B cell (primary cell): ENCODE measurements at regions of chr7 and their contacts with region 1.

Region 1: GRCh38 chr7:5396999-5397663 is 26.5 kb downstream of the TNRC18 start:
- DNase-seq: peak; percentile 96
- ATAC-seq: peak; percentile 94
- H3K4me3 ChIP-seq: peak overlapping the region; percentile 70 to 87 (median 79)
- H3K4me3 Mint-ChIP-seq: peak overlapping the region; percentile 86
- H3K27ac ChIP-seq: peak overlapping the region; percentile 81 to 96
- H3K27ac Mint-ChIP-seq: peak overlapping the region; percentile 89
- H3K4me1 ChIP-seq: peaks cover 19 to 33% of the 10 kb centered on the region in 2 donors
- H3K4me1 Mint-ChIP-seq: peaks cover 27% of the 10 kb centered on the region
- H3K27me3 ChIP-seq: no peaks in the 10 kb centered on the region
- H3K27me3 Mint-ChIP-seq: no peaks in the 10 kb centered on the region
- CTCF ChIP-seq: no peak

Region 2: DNA sequence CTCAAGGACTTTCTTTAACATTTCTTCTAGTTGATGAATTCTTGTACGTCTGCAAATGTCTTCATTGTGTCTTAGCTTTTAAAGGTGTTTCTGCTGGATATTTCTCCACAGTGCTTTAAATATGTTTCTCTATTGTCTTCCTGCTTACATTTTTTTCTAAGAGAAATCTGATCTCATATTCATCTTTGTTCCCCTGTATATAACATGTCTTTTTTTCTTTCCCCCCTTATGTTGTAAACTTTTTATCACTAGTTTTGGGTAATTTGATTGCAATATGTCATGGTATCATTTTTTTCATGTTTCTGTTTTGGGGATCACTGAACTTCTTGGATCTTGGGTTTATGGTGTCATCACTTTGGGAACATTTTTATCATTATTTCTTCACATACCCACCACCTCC is 344.0 kb before region 1 on chr7:
- CTCF ChIA-PET with region 1: no interaction called
- POLR2A ChIA-PET with region 1: no interaction called
- intact Hi-C with region 1: no loop called
- DNase-seq: no peak
- ATAC-seq: no peak
- H3K4me3 ChIP-seq: no peak overlapping the region
- H3K4me3 Mint-ChIP-seq: no peak overlapping the region
- H3K27ac ChIP-seq: no peak overlapping the region
- H3K27ac Mint-ChIP-seq: no peak overlapping the region
- H3K4me1 ChIP-seq: no peaks in the 10 kb centered on the region
- H3K4me1 Mint-ChIP-seq: peaks cover 9% of the 10 kb centered on the region
- H3K27me3 ChIP-seq: no peaks in the 10 kb centered on the region
- H3K27me3 Mint-ChIP-seq: no peaks in the 10 kb centered on the region
- CTCF ChIP-seq: no peak

Region 3: GRCh38 chr7:5237286-5237685 is 159.8 kb before region 1 on chr7:
- CTCF ChIA-PET with region 1: interaction called, 12 read pairs
- POLR2A ChIA-PET with region 1: interaction called, 4 read pairs
- intact Hi-C with region 1: loop called (anchors 2 kb)
- DNase-seq: peak; percentile 38
- ATAC-seq: no peak
- H3K4me3 ChIP-seq: no peak overlapping the region
- H3K4me3 Mint-ChIP-seq: peak overlapping the region; percentile 78
- H3K27ac ChIP-seq: no peak overlapping the region
- H3K27ac Mint-ChIP-seq: peak overlapping the region; percentile 84
- H3K4me1 ChIP-seq: peaks cover 61 to 67% of the 10 kb centered on the region in 2 donors
- H3K4me1 Mint-ChIP-seq: peaks cover 59% of the 10 kb centered on the region
- H3K27me3 ChIP-seq: peaks cover 0 to 9% (median 4%) of the 10 kb centered on the region in 4 experiments
- H3K27me3 Mint-ChIP-seq: peaks cover 5% of the 10 kb centered on the region
- CTCF ChIP-seq: no peak

Region 4: GRCh38 chr7:5450549-5451372 is 53.6 kb after region 1 on chr7:
- CTCF ChIA-PET with region 1: interaction called, 42 read pairs
- POLR2A ChIA-PET with region 1: no interaction called
- intact Hi-C with region 1: loop called (anchors 1 kb)
- DNase-seq: peak; percentile 52
- ATAC-seq: peak; percentile 68
- H3K4me3 ChIP-seq: no peak overlapping the region
- H3K4me3 Mint-ChIP-seq: no peak overlapping the region
- H3K27ac ChIP-seq: no peak overlapping the region
- H3K27ac Mint-ChIP-seq: no peak overlapping the region
- H3K4me1 ChIP-seq: no peaks in the 10 kb centered on the region
- H3K4me1 Mint-ChIP-seq: no peaks in the 10 kb centered on the region
- H3K27me3 ChIP-seq: peaks cover 0 to 4% (median 0%) of the 10 kb centered on the region in 4 experiments
- H3K27me3 Mint-ChIP-seq: peaks cover 2% of the 10 kb centered on the region
- CTCF ChIP-seq: peak; percentile 47

Region 5: DNA sequence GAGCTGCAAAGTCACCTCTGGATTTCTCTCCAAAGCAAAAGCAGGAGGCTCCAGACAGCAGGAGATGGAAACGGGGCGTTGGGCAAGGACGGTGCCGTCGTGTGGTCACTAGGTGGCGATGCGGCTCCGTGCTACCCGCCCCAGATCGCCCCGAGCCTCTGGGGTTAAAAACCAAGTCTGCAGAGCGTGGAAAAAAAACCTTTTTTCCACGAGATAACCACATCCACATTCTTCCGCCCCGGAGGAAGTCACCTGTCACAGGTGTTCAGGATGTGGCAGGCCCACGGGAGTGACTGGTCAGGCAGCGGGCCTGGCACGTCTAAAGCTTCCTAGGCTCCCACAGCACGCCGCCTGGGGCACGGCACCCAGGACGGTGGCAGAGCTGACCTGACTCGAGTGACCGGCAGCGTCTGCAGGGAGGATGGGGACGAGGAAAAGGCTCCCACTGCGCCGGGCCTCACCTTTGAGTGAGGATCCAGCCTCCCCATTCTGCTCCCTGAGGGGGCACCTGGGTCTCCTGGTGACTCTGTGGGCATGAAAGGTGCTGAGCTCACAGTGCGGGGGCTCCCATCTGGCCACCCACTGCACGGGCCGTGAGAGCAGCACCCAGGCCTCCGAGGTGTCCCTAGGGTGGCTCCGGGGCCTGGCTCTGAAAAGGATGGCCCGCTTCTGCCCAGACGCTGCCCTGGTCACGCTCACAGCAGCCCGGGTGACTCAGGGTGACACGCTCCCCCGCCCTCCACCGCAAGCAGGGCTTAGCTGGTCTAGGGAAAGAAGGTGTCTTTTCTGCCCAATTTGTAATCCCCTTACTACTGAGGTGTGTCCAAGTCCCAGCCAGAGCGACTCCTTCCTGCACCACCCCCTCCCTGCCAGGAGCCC is 97.8 kb after region 1 on chr7:
- CTCF ChIA-PET with region 1: interaction called, 12 read pairs
- POLR2A ChIA-PET with region 1: no interaction called
- intact Hi-C with region 1: no loop called
- DNase-seq: peak; percentile 86
- ATAC-seq: peak; percentile 89
- H3K4me3 ChIP-seq: peak overlapping the region in 4 of 5 experiments; percentile 38 to 59 (median 42)
- H3K4me3 Mint-ChIP-seq: peak overlapping the region; percentile 77
- H3K27ac ChIP-seq: peak overlapping the region; percentile 38 to 66
- H3K27ac Mint-ChIP-seq: peak overlapping the region; percentile 61
- H3K4me1 ChIP-seq: peaks cover 15 to 29% of the 10 kb centered on the region in 2 donors
- H3K4me1 Mint-ChIP-seq: peaks cover 23% of the 10 kb centered on the region
- H3K27me3 ChIP-seq: no peaks in the 10 kb centered on the region
- H3K27me3 Mint-ChIP-seq: no peaks in the 10 kb centered on the region
- CTCF ChIP-seq: peak; percentile 98

Region 6: DNA sequence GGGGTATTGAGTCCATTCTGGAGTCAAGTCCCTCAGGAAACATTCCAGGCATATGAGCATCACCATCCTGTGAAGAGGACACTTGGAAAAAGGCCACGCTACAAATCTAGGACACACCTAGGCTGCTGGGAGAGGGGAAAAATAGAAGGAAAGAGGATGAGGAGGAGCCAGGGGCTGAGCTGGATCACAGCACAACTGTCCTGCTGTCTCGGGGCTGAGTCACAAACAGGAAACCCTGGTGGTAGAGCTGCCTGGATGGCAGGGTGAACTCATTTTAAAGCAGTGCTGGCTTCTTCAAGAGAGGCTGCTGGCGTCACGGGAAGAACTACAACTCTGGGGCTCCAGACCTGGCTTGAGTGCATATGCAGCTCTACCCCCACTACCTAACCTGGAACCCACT is 232.8 kb after region 1 on chr7:
- CTCF ChIA-PET with region 1: no interaction called
- POLR2A ChIA-PET with region 1: no interaction called
- intact Hi-C with region 1: no loop called
- DNase-seq: no peak
- ATAC-seq: no peak
- H3K4me3 ChIP-seq: no peak overlapping the region
- H3K4me3 Mint-ChIP-seq: no peak overlapping the region
- H3K27ac ChIP-seq: no peak overlapping the region
- H3K27ac Mint-ChIP-seq: no peak overlapping the region
- H3K4me1 ChIP-seq: peaks cover 8 to 16% of the 10 kb centered on the region in 2 donors
- H3K4me1 Mint-ChIP-seq: peaks cover 24% of the 10 kb centered on the region
- H3K27me3 ChIP-seq: no peaks in the 10 kb centered on the region
- H3K27me3 Mint-ChIP-seq: no peaks in the 10 kb centered on the region
- CTCF ChIP-seq: no peak

Region 7: GRCh38 chr7:5665094-5666025 is 268.2 kb after region 1 on chr7:
- CTCF ChIA-PET with region 1: interaction called, 11 read pairs
- POLR2A ChIA-PET with region 1: no interaction called
- intact Hi-C with region 1: no loop called
- DNase-seq: peak; percentile 78
- ATAC-seq: peak; percentile 52
- H3K4me3 ChIP-seq: no peak overlapping the region
- H3K4me3 Mint-ChIP-seq: no peak overlapping the region
- H3K27ac ChIP-seq: no peak overlapping the region
- H3K27ac Mint-ChIP-seq: no peak overlapping the region
- H3K4me1 ChIP-seq: peaks cover 19 to 28% of the 10 kb centered on the region in 2 donors
- H3K4me1 Mint-ChIP-seq: peaks cover 29% of the 10 kb centered on the region
- H3K27me3 ChIP-seq: no peaks in the 10 kb centered on the region
- H3K27me3 Mint-ChIP-seq: no peaks in the 10 kb centered on the region
- CTCF ChIP-seq: peak; percentile 85